ENCODE measurements at regions of chr1 and their contacts with region 1.

Region 1: DNA sequence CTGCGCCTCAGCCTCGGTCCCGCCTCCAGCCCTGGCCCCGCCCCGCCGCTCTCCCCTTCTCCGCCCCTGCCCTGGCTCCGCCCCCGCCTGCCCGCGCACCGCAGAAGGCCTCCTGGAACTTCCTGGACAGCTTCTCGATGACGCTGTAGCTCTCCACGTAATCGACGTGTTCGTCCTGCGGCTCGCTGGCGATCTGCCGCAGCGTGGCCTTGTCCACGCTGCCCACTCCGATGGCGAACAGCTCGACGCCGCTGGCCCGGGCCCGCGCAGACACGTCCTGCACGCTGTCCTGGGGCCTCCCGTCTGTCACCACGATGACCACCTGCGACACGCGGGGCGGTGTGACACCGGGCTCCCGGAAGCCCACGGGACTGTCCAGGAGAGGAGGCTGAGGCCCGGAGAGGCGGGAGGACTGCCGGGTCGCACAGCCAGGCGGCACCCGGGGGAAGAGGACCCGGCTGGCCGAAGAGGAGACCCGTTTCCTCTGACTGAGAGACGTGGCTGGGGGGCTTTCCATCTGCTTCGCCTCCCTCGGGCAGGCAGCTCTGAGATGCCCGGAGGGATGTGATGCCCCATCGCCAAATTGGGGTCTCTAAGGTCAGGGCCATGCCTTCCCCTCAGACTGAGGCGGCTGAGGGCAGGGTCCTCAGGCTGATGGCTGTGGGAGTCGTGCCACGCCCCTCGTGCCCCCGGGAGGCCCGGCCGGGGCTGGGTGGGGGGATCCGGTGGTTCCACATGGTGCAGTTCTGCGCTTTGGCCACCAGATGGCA is 4.6 kb downstream of the MATN1 start:
- DNase-seq: peak; percentile 73 to 96 (median 89)
- H3K4me3 ChIP-seq: peak overlapping the region; percentile 88
- H3K4me3 Mint-ChIP-seq: peak overlapping the region; percentile 79 to 93 (median 89)
- H3K27ac ChIP-seq: peak overlapping the region; percentile 100
- H3K27ac Mint-ChIP-seq: peak overlapping the region; percentile 88 to 99 (median 96)
- H3K4me1 ChIP-seq: peaks cover 26% of the 10 kb centered on the region
- H3K4me1 Mint-ChIP-seq: peaks cover 21 to 48% (median 27%) of the 10 kb centered on the region in 3 donors
- H3K27me3 ChIP-seq: no peaks in the 10 kb centered on the region
- H3K27me3 Mint-ChIP-seq: no peaks in the 10 kb centered on the region

Region 2: GRCh38 chr1:30684881-30685795 is 33.7 kb before region 1 on chr1:
- CTCF ChIA-PET with region 1: no interaction called
- POLR2A ChIA-PET with region 1: no interaction called
- DNase-seq: peak in 3 of 5 donors; percentile 7 to 59 (median 30)
- H3K4me3 ChIP-seq: peak overlapping the region; percentile 22
- H3K4me3 Mint-ChIP-seq: peak overlapping the region in 6 of 7 donors; percentile 43 to 82 (median 58)
- H3K27ac ChIP-seq: no peak overlapping the region
- H3K27ac Mint-ChIP-seq: no peak overlapping the region
- H3K4me1 ChIP-seq: peaks cover 8% of the 10 kb centered on the region
- H3K4me1 Mint-ChIP-seq: peaks cover 4 to 11% (median 4%) of the 10 kb centered on the region in 3 donors
- H3K27me3 ChIP-seq: peaks cover 12% of the 10 kb centered on the region
- H3K27me3 Mint-ChIP-seq: peaks cover 22 to 68% of the 10 kb centered on the region in 2 donors

Region 3: GRCh38 chr1:30743584-30744059 is 24.8 kb after region 1 on chr1:
- CTCF ChIA-PET with region 1: interaction called, 76 read pairs
- POLR2A ChIA-PET with region 1: interaction called, 25 read pairs
- DNase-seq: peak; percentile 62 to 89 (median 84)
- H3K4me3 ChIP-seq: peak overlapping the region; percentile 61
- H3K4me3 Mint-ChIP-seq: peak overlapping the region; percentile 80 to 88 (median 84)
- H3K27ac ChIP-seq: peak overlapping the region; percentile 69
- H3K27ac Mint-ChIP-seq: peak overlapping the region; percentile 93 to 100 (median 100)
- H3K4me1 ChIP-seq: peaks cover 87% of the 10 kb centered on the region
- H3K4me1 Mint-ChIP-seq: peaks cover 94 to 100% (median 99%) of the 10 kb centered on the region in 3 donors
- H3K27me3 ChIP-seq: no peaks in the 10 kb centered on the region
- H3K27me3 Mint-ChIP-seq: peaks cover 0 to 3% of the 10 kb centered on the region in 2 donors

Region 4: DNA sequence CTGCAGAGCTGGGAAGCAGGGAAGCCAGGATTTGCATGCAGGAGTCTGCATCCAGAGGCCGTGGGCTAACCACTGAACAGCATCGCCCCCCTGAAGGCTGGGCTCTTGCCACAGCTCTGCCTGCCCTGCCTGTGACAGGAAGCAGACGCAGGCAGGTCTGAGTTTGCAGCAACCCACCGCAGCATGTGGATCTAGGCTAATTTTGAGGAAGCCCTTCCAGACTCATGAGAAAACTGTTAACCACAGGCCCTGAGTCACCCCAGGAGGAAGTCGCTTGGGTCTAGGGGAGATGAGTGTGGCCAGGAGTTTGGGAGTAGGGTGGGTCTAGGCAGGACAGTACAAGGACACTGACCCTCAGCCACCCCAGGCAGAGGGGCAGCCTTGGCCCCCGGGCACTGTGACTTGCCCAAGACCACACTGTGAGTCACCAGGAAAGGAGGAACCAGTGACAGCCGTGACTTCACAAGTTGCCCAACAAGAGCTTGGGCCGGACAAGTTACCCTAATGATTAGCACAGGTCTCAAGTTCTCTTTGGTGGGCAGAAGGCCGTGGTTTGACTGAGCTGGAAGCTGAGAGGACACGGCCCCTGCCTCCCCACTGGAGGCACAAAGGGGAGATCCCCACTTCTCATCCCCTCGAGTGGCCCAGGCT is 37.8 kb after region 1 on chr1:
- CTCF ChIA-PET with region 1: interaction called, 76 read pairs
- POLR2A ChIA-PET with region 1: interaction called, 25 read pairs
- DNase-seq: peak; percentile 70 to 90 (median 78)
- H3K4me3 ChIP-seq: peak overlapping the region; percentile 74
- H3K4me3 Mint-ChIP-seq: peak overlapping the region; percentile 96 to 100 (median 99)
- H3K27ac ChIP-seq: peak overlapping the region; percentile 96
- H3K27ac Mint-ChIP-seq: peak overlapping the region; percentile 98 to 100 (median 100)
- H3K4me1 ChIP-seq: peaks cover 75% of the 10 kb centered on the region
- H3K4me1 Mint-ChIP-seq: peaks cover 85 to 90% (median 86%) of the 10 kb centered on the region in 3 donors
- H3K27me3 ChIP-seq: no peaks in the 10 kb centered on the region
- H3K27me3 Mint-ChIP-seq: peaks cover 0 to 2% of the 10 kb centered on the region in 2 donors

Region 5: DNA sequence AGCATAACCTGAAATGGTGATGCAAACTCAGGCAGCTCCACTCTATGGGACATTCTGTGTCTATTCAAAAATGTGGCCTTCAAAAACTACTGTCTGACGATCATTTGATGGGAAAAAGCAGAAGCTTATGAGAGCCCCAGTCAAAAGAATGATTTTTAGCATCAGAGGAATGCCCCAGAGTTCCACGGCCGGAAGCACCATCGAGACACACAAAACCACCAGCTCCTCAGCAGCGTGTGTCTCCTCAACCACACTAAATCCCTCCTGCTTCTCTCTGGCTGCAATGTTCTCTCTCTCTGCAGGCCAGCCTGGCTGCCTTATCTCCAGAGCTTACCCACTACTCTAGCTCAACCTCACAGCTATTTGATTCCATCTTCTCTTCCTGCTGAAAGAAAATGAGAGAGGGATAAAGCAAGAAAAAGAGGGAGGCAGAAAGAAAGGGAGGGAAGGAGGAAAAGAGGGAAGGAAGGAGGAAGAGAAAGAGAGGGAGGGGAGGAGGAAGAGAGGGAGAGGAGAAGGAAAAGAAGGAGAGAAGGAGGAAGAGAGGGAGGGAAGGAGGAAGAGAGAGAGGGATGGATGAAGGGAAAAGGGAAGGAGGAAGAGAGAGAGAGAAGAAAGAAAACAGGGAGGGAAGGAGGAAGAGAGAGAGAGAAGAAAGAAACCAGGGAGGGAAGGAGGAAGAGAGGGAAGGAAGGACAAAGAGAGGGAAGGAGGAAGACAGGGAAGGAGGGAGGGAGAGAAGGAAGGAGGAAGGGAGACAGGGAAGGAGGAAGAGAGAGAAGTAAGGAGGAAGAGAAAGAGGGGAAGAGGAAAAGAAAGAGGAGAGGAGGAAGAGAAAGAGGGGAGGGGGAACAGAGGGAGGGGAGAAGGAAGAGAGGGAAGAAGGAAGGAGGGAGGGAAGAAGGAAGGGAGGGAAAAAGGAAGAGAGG is 72.3 kb after region 1 on chr1:
- CTCF ChIA-PET with region 1: interaction called, 525 read pairs
- POLR2A ChIA-PET with region 1: interaction called, 3 read pairs
- DNase-seq: peak in 2 of 5 donors; percentile 9 to 22
- H3K4me3 ChIP-seq: no peak overlapping the region
- H3K4me3 Mint-ChIP-seq: no peak overlapping the region
- H3K27ac ChIP-seq: no peak overlapping the region
- H3K27ac Mint-ChIP-seq: peak overlapping the region in 3 of 8 donors; percentile 23 to 87 (median 58)
- H3K4me1 ChIP-seq: peaks cover 8% of the 10 kb centered on the region
- H3K4me1 Mint-ChIP-seq: peaks cover 7 to 10% (median 7%) of the 10 kb centered on the region in 3 donors
- H3K27me3 ChIP-seq: no peaks in the 10 kb centered on the region
- H3K27me3 Mint-ChIP-seq: peaks cover 2 to 30% of the 10 kb centered on the region in 2 donors